ENCODE measurements at regions of chr1 and their contacts with region 1.

Region 1: DNA sequence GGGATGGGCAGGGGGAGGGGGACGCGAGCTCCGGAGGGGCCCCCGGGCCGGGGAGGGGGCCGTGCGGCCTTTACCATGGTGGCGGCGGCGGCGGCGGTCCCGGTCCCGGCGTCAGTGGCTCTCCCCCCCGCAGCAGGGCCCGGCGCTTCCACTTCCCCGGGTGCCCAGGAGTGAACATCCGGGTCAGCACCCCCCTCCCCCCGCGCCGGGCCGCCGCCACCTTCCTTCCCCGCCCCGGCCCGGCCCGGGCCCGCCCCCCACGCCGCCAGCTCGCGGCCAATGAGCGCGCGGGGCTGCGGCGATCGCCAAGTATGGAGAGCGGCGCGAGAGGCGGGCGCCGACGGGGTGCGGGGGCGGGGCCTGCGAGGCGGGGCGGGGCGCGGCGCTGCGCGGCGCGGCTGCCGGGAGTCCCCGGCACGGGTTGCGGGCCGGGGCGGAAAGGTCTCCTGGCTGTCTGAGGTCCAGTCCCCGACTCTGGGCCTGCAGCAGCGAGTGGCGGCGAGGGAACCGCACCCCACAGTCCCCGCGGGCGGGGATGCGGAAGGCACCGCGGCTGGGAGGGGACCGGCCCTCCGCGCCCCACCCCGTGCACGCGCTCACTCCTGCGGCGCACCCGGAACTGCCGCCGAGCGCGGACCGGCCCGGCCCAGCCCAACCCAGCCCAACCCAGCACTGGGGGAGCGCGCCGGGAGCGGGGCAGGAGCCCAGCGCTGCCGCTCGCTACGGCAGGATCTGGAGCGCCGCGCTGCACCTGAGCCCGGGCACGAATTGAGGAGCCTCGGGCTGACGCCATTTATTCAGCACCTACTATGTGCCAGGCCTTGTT is at the start of gene CAPZB:
- DNase-seq: peak; percentile 98
- ATAC-seq: peak; percentile 94
- H3K4me3 ChIP-seq: peak within 1 kb of the TSS; percentile 95
- H3K27ac ChIP-seq: peak within 1 kb of the TSS; percentile 95
- H3K4me1 ChIP-seq: peaks cover 57% of the 10 kb centered on the region
- H3K27me3 ChIP-seq: no peaks in the 10 kb centered on the region
- CTCF ChIP-seq: no peak
- total RNA-seq, gene CAPZB: 237 TPM

Region 2: GRCh38 chr1:19398309-19398760 is 87.2 kb before region 1 on chr1:
- intact Hi-C with region 1: no loop called
- DNase-seq: no peak
- ATAC-seq: peak; percentile 71
- H3K4me3 ChIP-seq: no peak overlapping the region
- H3K27ac ChIP-seq: peak overlapping the region; percentile 55
- H3K4me1 ChIP-seq: peaks cover 49% of the 10 kb centered on the region
- H3K27me3 ChIP-seq: no peaks in the 10 kb centered on the region
- CTCF ChIP-seq: peak; percentile 33

Region 3: DNA sequence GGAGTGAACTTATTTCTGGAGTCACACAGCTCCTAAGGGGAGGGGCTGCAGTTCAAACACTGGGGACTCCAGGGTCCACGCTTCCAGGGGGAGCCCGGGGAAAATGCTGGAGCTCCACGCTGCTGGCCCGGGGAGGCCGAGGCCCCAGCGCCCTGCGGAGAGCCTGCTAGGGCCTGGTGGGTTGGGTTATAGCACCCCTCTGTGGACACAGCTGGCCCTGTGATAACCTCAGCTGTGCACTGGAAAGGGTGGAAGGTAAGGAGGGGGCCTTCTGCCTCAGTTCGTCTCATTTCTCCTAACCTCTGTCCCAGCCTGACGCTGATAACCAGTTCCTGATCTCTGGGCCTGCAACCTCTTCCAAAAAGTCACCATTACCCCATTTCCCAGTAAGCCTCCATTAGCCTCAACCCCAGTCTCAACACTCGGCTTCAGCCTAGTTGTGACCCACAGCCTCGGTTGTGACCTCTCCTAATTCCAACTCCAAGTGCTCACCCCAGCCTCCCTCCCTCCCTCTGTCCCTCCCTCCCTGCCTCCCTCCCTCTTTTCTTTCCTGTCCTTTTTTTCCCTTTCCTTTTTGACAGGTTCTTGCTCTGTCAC is 165.7 kb after region 1 on chr1:
- intact Hi-C with region 1: loop called (anchors 10 kb)
- DNase-seq: no peak
- ATAC-seq: peak; percentile 70
- H3K4me3 ChIP-seq: no peak overlapping the region
- H3K27ac ChIP-seq: peak overlapping the region; percentile 63
- H3K4me1 ChIP-seq: peaks cover 37% of the 10 kb centered on the region
- H3K27me3 ChIP-seq: no peaks in the 10 kb centered on the region
- CTCF ChIP-seq: peak; percentile 65

Measured in upper lobe of right lung (tissue), 1 donor.